ENCODE measurements at regions of chr3 and their contacts with region 1.

Region 1: GRCh38 chr3:8441969-8442559 is 59.6 kb upstream of the LMCD1 start:
- DNase-seq: no peak
- H3K4me3 ChIP-seq: no peak overlapping the region
- H3K27ac ChIP-seq: peak overlapping the region; percentile 75 to 88
- H3K4me1 ChIP-seq: peaks cover 6 to 33% of the 10 kb centered on the region in 2 donors
- H3K27me3 ChIP-seq: no peaks in the 10 kb centered on the region
- CTCF ChIP-seq: peak; percentile 62 to 77 (median 77)

Region 2: GRCh38 chr3:8501371-8502131 is 59.5 kb after region 1 on chr3 and contains the start of gene LMCD1:
- intact Hi-C with region 1: loop called (anchors 1 kb)
- DNase-seq: peak; percentile 88 to 98
- H3K4me3 ChIP-seq: peak within 1 kb of the TSS; percentile 71 to 77
- H3K27ac ChIP-seq: peak within 1 kb of the TSS; percentile 83 to 91
- H3K4me1 ChIP-seq: peaks cover 0 to 13% of the 10 kb centered on the region in 2 donors
- H3K27me3 ChIP-seq: no peaks in the 10 kb centered on the region
- CTCF ChIP-seq: peak; percentile 26 to 30 (median 30)
- total RNA-seq, gene LMCD1: 634 TPM

Region 3: GRCh38 chr3:8607234-8608040 is 165.4 kb after region 1 on chr3:
- intact Hi-C with region 1: loop called (anchors 2 kb)
- DNase-seq: peak; percentile 34 to 79
- H3K4me3 ChIP-seq: peak overlapping the region in 1 of 2 donors; percentile 2
- H3K27ac ChIP-seq: peak overlapping the region in 1 of 2 donors; percentile 24
- H3K4me1 ChIP-seq: peaks cover 12 to 22% of the 10 kb centered on the region in 2 donors
- H3K27me3 ChIP-seq: no peaks in the 10 kb centered on the region
- CTCF ChIP-seq: peak; percentile 70 to 80 (median 75)

Region 4: DNA sequence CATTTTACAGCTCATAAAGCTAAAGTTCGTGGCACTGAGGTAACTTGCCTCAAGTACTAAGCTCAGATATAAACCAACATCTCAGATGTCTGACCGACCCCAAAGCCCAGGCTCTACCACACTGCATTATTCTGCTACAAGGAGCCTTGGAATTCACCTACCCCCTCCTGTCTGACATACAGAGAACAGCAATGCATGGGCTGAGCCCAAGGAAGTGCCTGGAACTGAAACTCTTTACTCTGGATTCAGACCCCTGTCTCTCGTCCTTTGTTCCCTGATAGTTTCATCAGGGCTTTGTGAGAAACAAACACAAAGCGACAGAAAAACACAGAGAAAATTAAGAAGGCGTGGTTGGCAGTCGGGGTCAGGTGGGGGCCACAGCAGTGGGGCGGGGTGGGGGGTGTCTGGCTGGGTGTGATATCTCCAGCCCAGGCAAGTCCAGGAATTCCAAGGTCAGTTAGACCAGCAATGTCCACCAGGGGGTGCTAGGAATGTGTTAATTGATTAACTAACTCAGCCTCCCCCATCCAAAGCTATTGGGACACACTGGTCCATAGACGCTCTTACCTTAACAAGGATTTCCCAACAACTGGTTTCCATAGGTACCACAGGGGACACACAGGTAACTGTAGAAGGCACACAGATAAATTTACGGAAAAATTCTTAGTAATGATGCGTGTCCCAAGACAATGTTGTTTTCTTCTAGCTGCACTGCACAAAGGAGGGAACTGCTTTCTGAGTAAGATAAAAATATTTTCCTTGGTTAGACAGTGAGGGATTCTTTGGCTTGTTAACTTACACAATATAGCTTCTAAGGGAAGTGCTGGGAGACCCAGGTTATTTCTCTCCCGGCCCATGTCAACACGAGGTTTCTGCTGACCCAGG is 221.4 kb after region 1 on chr3:
- intact Hi-C with region 1: loop called (anchors 2 kb)
- DNase-seq: peak in 1 of 2 donors; percentile 72
- H3K4me3 ChIP-seq: no peak overlapping the region
- H3K27ac ChIP-seq: no peak overlapping the region
- H3K4me1 ChIP-seq: peaks cover 21 to 28% of the 10 kb centered on the region in 2 donors
- H3K27me3 ChIP-seq: no peaks in the 10 kb centered on the region
- CTCF ChIP-seq: peak in 2 of 3 experiments; percentile 57 to 59

Region 5: DNA sequence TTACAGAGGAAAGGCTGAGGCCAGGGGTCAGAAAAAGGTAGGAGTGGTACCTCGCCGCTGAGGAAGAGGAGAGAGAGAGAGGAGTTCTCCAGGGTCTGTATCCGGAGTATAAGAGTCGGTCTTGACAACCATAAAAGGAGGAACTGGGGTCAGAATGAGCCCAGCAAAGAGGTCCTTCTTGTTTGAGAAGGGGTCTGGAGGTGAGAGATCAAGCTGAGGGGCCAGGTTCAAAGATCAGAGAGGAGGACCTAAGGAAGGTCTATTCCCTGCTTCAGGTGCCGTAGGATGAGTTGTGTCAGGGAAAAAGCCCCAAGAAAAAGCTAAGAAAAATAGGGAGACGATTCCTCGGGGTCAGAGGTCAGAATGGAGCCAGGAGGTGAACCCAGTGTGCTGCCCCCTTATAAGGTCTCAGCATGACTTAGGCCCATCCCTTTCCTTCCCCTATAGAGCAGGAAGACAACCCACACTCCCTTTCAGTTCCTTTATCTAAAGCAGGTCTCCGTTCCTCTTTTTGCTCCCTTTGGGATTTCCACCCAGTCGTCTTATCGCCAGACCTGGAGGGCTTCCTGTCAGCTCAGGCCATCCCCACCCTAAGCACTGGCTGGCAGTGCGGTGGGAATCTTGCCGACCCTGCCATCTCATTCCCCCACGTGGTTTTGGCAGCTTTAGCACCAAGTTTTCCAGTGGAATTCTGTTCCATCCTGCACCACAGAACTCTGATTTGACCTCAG is 1207.9 kb after region 1 on chr3:
- intact Hi-C with region 1: loop called (anchors 10 kb)
- DNase-seq: peak in 1 of 2 donors; percentile 61
- H3K4me3 ChIP-seq: peak overlapping the region; percentile 92 to 97
- H3K27ac ChIP-seq: peak overlapping the region; percentile 86 to 87
- H3K4me1 ChIP-seq: peaks cover 3 to 5% of the 10 kb centered on the region in 2 donors
- H3K27me3 ChIP-seq: no peaks in the 10 kb centered on the region
- CTCF ChIP-seq: no peak